Heart left ventricle (tissue), 16 donors: ENCODE measurements at regions of chr22 and their contacts with region 1.

Region 1: DNA sequence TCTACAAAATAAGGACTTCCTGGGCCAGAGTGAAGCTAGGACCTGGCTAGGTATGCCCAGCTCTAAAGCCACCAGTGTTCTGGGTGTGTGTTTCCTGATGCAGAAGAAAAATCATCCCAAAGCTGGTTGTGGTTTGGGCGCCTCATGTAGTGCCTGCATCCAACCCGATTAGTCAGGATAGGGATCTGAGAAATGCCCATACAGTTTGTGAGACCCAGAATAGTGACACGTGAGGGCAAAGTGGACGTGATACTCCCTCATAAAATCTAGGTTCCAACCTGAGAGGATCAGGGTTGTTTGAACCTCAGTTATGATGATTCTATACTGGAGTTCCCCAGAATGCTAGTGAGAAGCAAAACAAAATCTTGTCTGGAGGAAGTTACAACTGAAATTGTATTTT is 238.4 kb downstream of the TBC1D22A start:
- DNase-seq: no peak
- ATAC-seq: no peak
- H3K4me3 ChIP-seq: no peak overlapping the region
- H3K27ac ChIP-seq: no peak overlapping the region
- H3K4me1 ChIP-seq: peaks cover 0 to 9% (median 0%) of the 10 kb centered on the region in 12 donors
- H3K27me3 ChIP-seq: no peaks in the 10 kb centered on the region
- CTCF ChIP-seq: no peak
- POLR2A ChIP-seq: no peak

Region 2: GRCh38 chr22:46878191-46878948 is 122.5 kb before region 1 on chr22:
- intact Hi-C with region 1: loop called in 1 of 10 experiments (anchors 10 kb)
- DNase-seq: no peak
- ATAC-seq: no peak
- H3K4me3 ChIP-seq: no peak overlapping the region
- H3K27ac ChIP-seq: no peak overlapping the region
- H3K4me1 ChIP-seq: peaks cover 0 to 25% (median 0%) of the 10 kb centered on the region in 12 donors
- H3K27me3 ChIP-seq: no peaks in the 10 kb centered on the region
- CTCF ChIP-seq: no peak
- POLR2A ChIP-seq: no peak